ENCODE measurements at regions of chr3 and their contacts with region 1.

Region 1: GRCh38 chr3:100737334-100737733 is 28.0 kb downstream of the TFG start:
- DNase-seq: no peak
- ATAC-seq: peak; percentile 44
- H3K4me3 Mint-ChIP-seq: no peak overlapping the region
- H3K27ac Mint-ChIP-seq: no peak overlapping the region
- H3K4me1 Mint-ChIP-seq: peaks cover 7% of the 10 kb centered on the region
- H3K27me3 Mint-ChIP-seq: no peaks in the 10 kb centered on the region

Region 2: GRCh38 chr3:100725935-100726513 is 11.3 kb before region 1 on chr3:
- CTCF ChIA-PET with region 1: interaction called, 11 read pairs
- POLR2A ChIA-PET with region 1: interaction called, 4 read pairs
- DNase-seq: no peak
- ATAC-seq: no peak
- H3K4me3 Mint-ChIP-seq: no peak overlapping the region
- H3K27ac Mint-ChIP-seq: peak overlapping the region; percentile 28
- H3K4me1 Mint-ChIP-seq: peaks cover 17% of the 10 kb centered on the region
- H3K27me3 Mint-ChIP-seq: no peaks in the 10 kb centered on the region